ENCODE measurements at regions of chr10 and their contacts with region 1.

Region 1: DNA sequence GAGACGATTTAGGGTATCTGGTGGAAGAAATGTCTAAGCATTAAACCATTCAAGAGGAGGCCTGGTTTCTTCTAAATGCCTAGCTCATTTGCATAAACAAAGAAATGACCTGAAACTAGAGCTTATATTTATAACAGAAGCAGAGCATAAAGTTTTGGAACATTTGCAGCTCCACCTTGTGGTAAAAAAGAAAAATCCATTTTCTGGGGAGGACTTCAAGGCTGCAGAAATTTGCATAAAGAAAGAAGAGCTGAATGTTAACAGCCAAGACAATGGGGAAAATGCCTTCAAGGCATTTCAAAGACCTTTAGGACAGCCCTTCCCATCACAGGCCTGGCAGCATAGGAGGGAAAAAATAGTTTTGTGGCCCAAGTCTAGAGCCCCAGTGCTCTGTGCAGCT is 362.0 kb downstream of the ZNF248 start:
- H3K4me3 Mint-ChIP-seq: no peak overlapping the region
- H3K27ac Mint-ChIP-seq: no peak overlapping the region
- H3K4me1 Mint-ChIP-seq: no peaks in the 10 kb centered on the region
- H3K27me3 Mint-ChIP-seq: no peaks in the 10 kb centered on the region

Region 2: GRCh38 chr10:37439826-37440225 is 55.6 kb before region 1 on chr10:
- intact Hi-C with region 1: no loop called
- H3K4me3 Mint-ChIP-seq: no peak overlapping the region
- H3K27ac Mint-ChIP-seq: no peak overlapping the region
- H3K4me1 Mint-ChIP-seq: peaks cover 9% of the 10 kb centered on the region
- H3K27me3 Mint-ChIP-seq: no peaks in the 10 kb centered on the region

Region 3: GRCh38 chr10:37552881-37553280 is 57.5 kb after region 1 on chr10:
- intact Hi-C with region 1: loop called (anchors 10 kb)
- H3K4me3 Mint-ChIP-seq: no peak overlapping the region
- H3K27ac Mint-ChIP-seq: no peak overlapping the region
- H3K4me1 Mint-ChIP-seq: no peaks in the 10 kb centered on the region
- H3K27me3 Mint-ChIP-seq: no peaks in the 10 kb centered on the region